OCI-LY7 (cell line): ENCODE measurements at regions of chr15 and their contacts with region 1.

Region 1: GRCh38 chr15:94263341-94264273 is 32.2 kb downstream of the MCTP2 start:
- DNase-seq: peak; percentile 27
- H3K4me3 ChIP-seq: peak overlapping the region; percentile 15
- H3K27ac ChIP-seq: peak overlapping the region; percentile 66
- H3K4me1 ChIP-seq: peaks cover 87% of the 10 kb centered on the region
- CTCF ChIP-seq: no peak

Region 2: GRCh38 chr15:94154245-94154644 is 109.4 kb before region 1 on chr15:
- CTCF ChIA-PET with region 1: no interaction called
- POLR2A ChIA-PET with region 1: no interaction called
- intact Hi-C with region 1: no loop called
- DNase-seq: no peak
- H3K4me3 ChIP-seq: no peak overlapping the region
- H3K27ac ChIP-seq: no peak overlapping the region
- H3K4me1 ChIP-seq: no peaks in the 10 kb centered on the region
- CTCF ChIP-seq: peak; percentile 56; the same call in 1 of the 2 replicates

Region 3: DNA sequence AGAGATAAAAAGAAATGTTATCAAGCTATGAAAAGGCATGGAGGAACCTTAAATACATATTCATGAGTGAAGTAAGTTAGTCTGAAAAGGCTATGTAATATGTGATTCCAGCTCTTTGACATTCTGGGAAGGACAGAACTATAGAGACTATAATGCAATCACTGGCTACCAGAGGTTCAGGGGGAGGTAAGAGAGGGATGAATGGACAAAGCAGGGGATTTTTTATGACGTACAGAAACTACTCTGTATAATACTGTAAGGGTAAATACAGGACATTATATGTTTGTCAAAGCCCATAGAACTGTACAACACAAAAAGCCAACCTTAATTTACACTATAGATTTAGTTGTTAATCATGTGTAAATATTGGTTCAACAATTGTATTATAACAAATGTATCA is 13.9 kb after region 1 on chr15:
- CTCF ChIA-PET with region 1: no interaction called
- POLR2A ChIA-PET with region 1: interaction called, 12 read pairs
- intact Hi-C with region 1: no loop called
- DNase-seq: no peak
- H3K4me3 ChIP-seq: no peak overlapping the region
- H3K27ac ChIP-seq: no peak overlapping the region
- H3K4me1 ChIP-seq: peaks cover 64% of the 10 kb centered on the region
- CTCF ChIP-seq: no peak

Region 4: DNA sequence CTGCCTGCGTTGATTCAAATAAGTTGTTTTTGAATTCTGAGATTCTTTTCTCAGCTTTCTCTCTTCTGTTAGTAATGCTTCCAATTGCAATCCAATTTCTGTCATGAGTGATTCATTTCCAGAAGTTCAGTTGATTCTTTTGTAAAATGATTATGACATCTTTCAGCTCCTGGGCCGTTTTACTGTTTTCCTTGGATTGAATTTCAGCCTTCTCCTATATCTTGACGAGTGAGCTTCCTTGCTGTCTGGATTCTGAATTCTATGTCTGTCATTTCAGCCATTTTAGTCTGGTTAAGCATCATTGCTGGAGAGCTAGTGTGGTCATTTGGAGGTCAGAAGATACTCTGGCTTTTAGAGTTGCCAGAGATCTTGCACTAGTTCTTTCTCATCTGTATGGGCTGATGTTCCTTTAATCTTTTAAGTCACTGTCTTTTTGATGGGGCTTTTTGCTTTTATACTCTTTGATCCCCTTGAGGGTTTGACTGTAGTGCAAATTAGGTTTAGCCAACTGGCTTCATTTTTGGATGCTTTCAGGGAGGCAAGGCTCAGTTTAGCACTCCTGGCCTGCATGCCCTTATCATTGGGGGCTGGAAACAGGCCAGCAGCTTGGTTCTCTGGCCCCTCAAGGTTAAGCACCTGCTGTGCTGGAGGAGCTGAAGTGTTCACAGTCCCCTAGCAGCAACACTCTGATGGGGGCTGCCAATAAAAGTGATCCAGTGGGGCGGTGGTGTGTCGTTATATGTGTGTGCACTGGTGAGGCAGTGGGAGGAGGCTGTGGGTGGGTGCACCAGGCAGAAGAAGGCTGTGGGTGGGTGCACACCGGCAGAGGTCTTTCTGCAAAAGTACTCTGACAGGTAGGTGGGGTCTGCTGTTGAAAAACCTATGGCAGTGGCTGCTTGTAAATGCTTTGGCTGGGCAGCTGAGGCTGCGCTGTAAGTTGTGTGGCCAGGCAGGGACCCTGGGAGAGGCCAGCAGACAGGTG is 19.0 kb after region 1 on chr15:
- CTCF ChIA-PET with region 1: interaction called, 6 read pairs
- POLR2A ChIA-PET with region 1: interaction called, 65 read pairs
- intact Hi-C with region 1: loop called (anchors 1 kb)
- DNase-seq: no peak
- H3K4me3 ChIP-seq: no peak overlapping the region
- H3K27ac ChIP-seq: no peak overlapping the region
- H3K4me1 ChIP-seq: peaks cover 80% of the 10 kb centered on the region
- CTCF ChIP-seq: no peak

Region 5: GRCh38 chr15:94297558-94297957 is 34.0 kb after region 1 on chr15:
- CTCF ChIA-PET with region 1: no interaction called
- POLR2A ChIA-PET with region 1: interaction called, 16 read pairs
- intact Hi-C with region 1: loop called (anchors 2 kb)
- DNase-seq: peak; percentile 90
- H3K4me3 ChIP-seq: peak overlapping the region; percentile 54
- H3K27ac ChIP-seq: peak overlapping the region; percentile 91
- H3K4me1 ChIP-seq: peaks cover 74% of the 10 kb centered on the region
- CTCF ChIP-seq: no peak; the same call in 1 of the 2 replicates

Region 6: DNA sequence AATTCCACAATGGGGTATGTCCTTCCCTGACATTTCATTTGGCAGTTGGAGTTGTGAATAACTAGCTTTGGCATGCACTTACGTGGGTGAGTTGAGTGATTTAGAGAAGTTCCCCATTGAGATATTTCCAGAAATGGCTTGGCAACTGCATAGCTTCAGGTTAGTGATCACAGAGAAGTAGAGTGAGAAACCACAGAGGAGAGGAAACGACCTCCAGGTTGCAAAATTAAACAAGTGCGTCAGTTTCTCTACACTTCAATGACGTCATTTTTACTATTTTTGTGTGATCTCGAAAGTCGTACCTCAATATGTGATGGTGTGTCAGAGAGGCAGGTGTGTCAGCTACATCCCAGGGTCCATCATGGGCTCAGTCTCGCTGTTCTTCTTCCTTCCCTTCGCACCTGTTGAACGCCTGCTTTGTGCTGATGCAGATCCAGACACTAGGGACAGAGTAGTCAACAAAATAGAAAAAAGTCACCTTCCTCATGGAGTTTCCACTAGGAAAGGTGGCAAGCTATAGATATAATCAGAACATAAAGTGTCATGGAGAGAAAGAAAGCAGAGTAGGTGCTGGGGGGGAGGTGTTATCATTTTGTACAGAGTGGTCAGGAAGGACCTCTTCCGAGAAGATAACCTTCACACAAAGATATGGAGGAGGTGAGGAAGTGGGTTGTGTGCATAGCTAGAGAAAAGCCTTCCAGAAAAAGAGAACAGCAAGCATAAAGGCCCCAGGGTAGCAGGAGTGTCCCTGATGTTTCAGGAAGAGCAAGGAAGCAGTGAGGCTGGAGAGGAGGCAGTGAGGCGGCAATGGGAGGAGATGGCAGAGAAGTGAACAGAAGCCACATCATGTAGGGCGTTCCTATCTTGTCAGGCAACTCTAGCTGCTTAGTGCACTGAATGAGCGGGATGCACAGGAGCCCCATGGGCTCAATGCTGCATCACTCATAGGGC is 43.4 kb after region 1 on chr15:
- CTCF ChIA-PET with region 1: interaction called, 4 read pairs
- POLR2A ChIA-PET with region 1: interaction called, 25 read pairs
- intact Hi-C with region 1: loop called (anchors 2 kb)
- DNase-seq: peak; percentile 91
- H3K4me3 ChIP-seq: peak overlapping the region; percentile 28
- H3K27ac ChIP-seq: peak overlapping the region; percentile 86
- H3K4me1 ChIP-seq: peaks cover 62% of the 10 kb centered on the region
- CTCF ChIP-seq: no peak; the same call in 1 of the 2 replicates